ENCODE measurements at regions of chr2 and their contacts with region 1.

Region 1: GRCh38 chr2:134245340-134245984 is 8.4 kb upstream of the MGAT5 start:
- DNase-seq: peak; percentile 82 to 86
- H3K4me3 ChIP-seq: no peak overlapping the region
- H3K27ac ChIP-seq: no peak overlapping the region
- H3K4me1 ChIP-seq: peaks cover 5 to 15% of the 10 kb centered on the region in 2 donors
- H3K27me3 ChIP-seq: no peaks in the 10 kb centered on the region
- CTCF ChIP-seq: peak; percentile 52 to 85 (median 66)
- POLR2A ChIP-seq: no peak

Region 2: DNA sequence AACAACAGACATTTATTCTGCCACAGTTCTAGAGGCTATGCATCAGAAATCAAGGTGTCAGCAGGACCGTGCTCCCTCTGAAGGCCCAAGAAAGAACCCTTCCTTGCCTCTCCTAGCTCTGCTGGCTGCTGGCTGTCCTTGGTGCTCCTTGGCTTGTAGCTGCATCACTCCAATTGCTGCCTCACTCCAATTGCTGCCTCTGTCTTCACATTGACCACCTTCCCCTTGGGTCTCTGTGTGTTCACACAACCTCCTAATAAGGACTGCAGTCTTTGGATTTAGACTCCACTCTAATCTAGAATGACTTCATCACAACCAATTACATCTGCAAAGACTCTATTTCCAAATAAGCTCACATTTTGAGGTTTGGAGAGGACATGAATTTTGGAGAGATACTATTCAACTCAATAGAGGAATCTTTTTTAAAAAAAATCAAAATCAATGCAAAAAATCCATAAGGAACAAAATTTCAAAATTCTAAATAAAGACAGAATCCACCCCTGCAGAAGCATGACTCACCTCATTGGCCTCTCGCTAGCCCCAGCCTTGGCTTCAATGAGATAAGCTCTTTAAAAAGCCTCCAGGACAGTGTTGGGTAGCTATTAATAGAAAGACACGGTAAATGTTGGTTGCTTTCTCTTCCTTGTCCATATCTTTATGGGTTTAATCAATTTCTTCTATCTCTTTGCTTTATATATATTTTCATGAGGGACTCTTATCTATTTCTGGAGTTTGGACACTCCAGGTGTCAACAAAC is 259.2 kb before region 1 on chr2:
- intact Hi-C with region 1: no loop called
- DNase-seq: peak in 1 of 2 donors; percentile 27
- H3K4me3 ChIP-seq: no peak overlapping the region
- H3K27ac ChIP-seq: peak overlapping the region; percentile 69 to 77 (median 75)
- H3K4me1 ChIP-seq: peaks cover 24 to 28% of the 10 kb centered on the region in 2 donors
- H3K27me3 ChIP-seq: no peaks in the 10 kb centered on the region
- CTCF ChIP-seq: no peak
- POLR2A ChIP-seq: no peak

Region 3: GRCh38 chr2:134087371-134087921 is 158.0 kb before region 1 on chr2:
- intact Hi-C with region 1: no loop called
- DNase-seq: no peak
- H3K4me3 ChIP-seq: no peak overlapping the region
- H3K27ac ChIP-seq: no peak overlapping the region
- H3K4me1 ChIP-seq: no peaks in the 10 kb centered on the region
- H3K27me3 ChIP-seq: no peaks in the 10 kb centered on the region
- CTCF ChIP-seq: no peak
- POLR2A ChIP-seq: no peak

Region 4: DNA sequence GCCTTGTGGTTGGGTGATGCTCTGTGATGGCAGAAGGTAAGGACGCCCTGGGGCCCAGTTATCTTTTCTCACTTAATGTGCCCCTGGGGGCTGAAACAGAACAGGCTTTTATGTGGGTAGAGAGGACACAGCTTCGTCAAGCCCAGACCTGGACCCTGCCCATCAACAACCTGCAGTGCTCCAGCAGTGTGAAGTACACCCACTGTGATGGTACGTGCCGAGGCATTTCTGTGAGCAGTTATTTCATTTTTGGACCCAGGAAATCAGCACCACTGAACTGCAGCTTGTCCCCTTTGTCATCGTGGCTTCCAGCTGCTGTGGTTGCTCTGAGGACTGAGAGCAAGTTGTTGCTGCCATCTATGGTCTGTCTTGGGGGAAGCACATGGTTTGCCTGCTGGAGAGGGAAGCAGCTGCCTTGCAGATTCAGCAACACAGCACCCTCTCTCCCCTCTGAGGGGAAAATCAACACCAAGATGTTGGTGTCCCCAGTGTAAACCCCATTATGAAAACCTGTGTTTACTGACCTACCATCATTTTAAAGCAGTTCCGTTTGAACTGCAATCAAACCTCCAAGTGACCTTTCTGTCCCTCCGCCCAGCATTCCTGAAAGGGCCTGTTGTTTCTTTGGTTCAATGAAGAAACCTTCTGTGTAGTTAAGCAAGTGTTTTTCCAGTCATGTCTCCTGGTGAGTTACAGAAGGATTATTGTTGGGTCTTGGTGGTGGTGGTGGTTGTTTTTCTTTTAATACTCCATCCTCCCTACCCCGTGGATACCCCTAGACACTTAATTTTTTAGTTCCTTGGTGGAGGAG is 166.6 kb after region 1 on chr2:
- intact Hi-C with region 1: loop called (anchors 10 kb)
- DNase-seq: peak; percentile 67 to 70
- H3K4me3 ChIP-seq: no peak overlapping the region
- H3K27ac ChIP-seq: peak overlapping the region in 1 of 3 donors; percentile 39
- H3K4me1 ChIP-seq: peaks cover 0 to 18% of the 10 kb centered on the region in 2 donors
- H3K27me3 ChIP-seq: no peaks in the 10 kb centered on the region
- CTCF ChIP-seq: peak in 4 of 6 experiments; percentile 70 to 88 (median 79)
- POLR2A ChIP-seq: no peak